Vagina (tissue), 2 donors: ENCODE measurements at regions of chr1 and their contacts with region 1.

Region 1: GRCh38 chr1:108125312-108126138 is 74.6 kb downstream of the SLC25A24 start:
- DNase-seq: peak in 1 of 2 donors; percentile 91
- H3K4me3 ChIP-seq: no peak overlapping the region
- H3K27ac ChIP-seq: no peak overlapping the region
- H3K4me1 ChIP-seq: no peaks in the 10 kb centered on the region
- H3K27me3 ChIP-seq: no peaks in the 10 kb centered on the region
- CTCF ChIP-seq: peak; percentile 88 to 93 (median 91)
- POLR2A ChIP-seq: no peak

Region 2: GRCh38 chr1:107782217-107782845 is 343.2 kb before region 1 on chr1:
- intact Hi-C with region 1: loop called (anchors 2 kb)
- DNase-seq: no peak
- H3K4me3 ChIP-seq: no peak overlapping the region
- H3K27ac ChIP-seq: no peak overlapping the region
- H3K4me1 ChIP-seq: no peaks in the 10 kb centered on the region
- H3K27me3 ChIP-seq: no peaks in the 10 kb centered on the region
- CTCF ChIP-seq: peak; percentile 72 to 77 (median 75)
- POLR2A ChIP-seq: no peak

Region 3: DNA sequence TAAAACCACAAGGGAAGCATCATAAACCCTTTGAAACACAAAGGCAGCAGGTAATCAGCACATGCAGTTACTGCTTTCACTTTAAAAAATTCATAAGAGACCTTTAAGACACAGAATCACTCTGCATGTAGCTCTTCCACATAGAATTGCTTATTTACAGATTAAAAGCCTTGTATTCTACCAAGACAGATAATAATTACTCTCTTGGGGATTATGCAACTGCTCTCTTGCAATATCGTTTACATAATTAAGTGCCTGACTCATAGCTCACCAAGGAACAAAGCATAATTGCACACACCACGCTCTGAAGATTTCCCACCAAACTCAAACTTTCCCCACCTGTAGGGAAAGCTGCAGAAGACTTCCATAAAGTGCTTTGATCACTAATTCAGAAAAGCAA is 248.4 kb before region 1 on chr1:
- intact Hi-C with region 1: no loop called
- DNase-seq: no peak
- H3K4me3 ChIP-seq: no peak overlapping the region
- H3K27ac ChIP-seq: no peak overlapping the region
- H3K4me1 ChIP-seq: no peaks in the 10 kb centered on the region
- H3K27me3 ChIP-seq: no peaks in the 10 kb centered on the region
- CTCF ChIP-seq: no peak
- POLR2A ChIP-seq: no peak

Region 4: DNA sequence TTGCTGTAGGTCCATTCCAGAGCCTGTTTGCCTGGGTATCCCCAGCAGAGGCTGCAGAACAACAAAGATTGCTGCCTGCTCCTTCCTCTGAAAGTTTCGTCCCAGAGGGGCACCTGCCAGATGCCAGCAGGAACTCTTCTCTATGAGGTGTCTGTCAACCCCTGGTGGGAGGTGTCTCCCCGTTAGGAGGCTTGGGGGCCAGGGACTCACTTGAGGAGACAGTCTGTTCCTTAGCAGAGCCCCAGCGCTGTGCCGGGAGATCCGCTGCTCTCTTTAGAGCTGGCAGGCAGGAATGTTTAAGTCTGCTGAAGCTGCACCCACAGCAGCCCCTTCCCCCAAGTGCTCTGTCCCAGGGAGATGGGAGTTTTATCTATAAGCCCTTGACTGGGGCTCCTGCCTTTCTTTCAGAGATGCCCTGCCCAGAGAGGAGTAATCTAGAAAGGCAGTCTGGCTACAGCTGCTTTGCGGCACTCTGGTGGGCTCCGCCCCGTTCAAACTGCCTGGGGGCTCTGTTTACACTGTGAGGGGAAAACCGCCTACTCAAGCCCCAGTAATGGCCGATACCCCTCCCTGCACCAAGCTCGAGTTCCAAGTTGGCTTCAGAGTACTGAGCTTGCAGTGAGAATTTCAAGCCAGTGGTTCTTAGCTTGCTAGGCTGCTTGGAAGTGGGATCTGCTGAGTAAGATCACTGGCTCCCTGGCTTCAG is 83.4 kb after region 1 on chr1:
- intact Hi-C with region 1: no loop called
- DNase-seq: no peak
- H3K4me3 ChIP-seq: no peak overlapping the region
- H3K27ac ChIP-seq: no peak overlapping the region
- H3K4me1 ChIP-seq: no peaks in the 10 kb centered on the region
- H3K27me3 ChIP-seq: no peaks in the 10 kb centered on the region
- CTCF ChIP-seq: no peak
- POLR2A ChIP-seq: no peak